GM12878 (cell line): ENCODE measurements at regions of chr11 and their contacts with region 1.

Region 1: GRCh38 chr11:122814401-122814800 is 23.9 kb upstream of the CRTAM start:
- DNase-seq: no peak
- ATAC-seq: peak; percentile 93
- H3K4me3 ChIP-seq: no peak overlapping the region
- H3K27ac ChIP-seq: no peak overlapping the region
- H3K4me1 ChIP-seq: no peaks in the 10 kb centered on the region; the same call in 1 of the 2 replicates
- H3K27me3 ChIP-seq: no peaks in the 10 kb centered on the region
- CTCF ChIP-seq: peak; percentile 22 to 51 (median 28); a peak in 3 of 6 replicates
- EP300 ChIP-seq: no peak
- POLR2A ChIP-seq: no peak
- RAD21 ChIP-seq: peak; percentile 60

Region 2: DNA sequence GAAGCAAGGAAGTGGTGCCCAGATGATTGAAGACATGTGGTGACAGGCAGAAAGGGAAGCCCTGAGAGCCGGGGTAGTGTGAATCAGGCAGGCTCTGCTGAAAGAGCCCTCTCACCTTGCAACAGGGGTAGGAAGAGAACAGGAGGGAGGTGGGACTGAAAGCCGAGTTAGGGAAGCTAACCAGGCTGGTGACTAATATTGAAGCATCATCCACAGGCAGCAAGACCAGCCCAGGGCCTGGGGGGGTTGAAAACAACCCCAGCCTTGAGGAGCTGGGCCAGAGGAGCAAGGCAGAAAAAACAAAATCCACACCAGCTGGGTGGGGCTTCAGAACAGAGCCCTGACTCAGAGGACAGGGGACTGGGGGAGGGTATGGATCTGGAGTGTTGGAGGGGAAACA is 11.1 kb before region 1 on chr11:
- CTCF ChIA-PET with region 1: interaction called, 92 read pairs
- POLR2A ChIA-PET with region 1: interaction called, 4 read pairs
- RAD21 ChIA-PET with region 1: interaction called, 38 read pairs
- SMC1A ChIA-PET with region 1: interaction called, 68 read pairs
- in situ Hi-C with region 1: no loop called
- intact Hi-C with region 1: no loop called
- DNase-seq: no peak
- ATAC-seq: peak; percentile 16
- H3K4me3 ChIP-seq: no peak overlapping the region
- H3K27ac ChIP-seq: no peak overlapping the region
- H3K4me1 ChIP-seq: peaks cover 17% of the 10 kb centered on the region
- H3K27me3 ChIP-seq: no peaks in the 10 kb centered on the region
- CTCF ChIP-seq: no peak
- EP300 ChIP-seq: no peak
- POLR2A ChIP-seq: no peak
- RAD21 ChIP-seq: no peak

Region 3: DNA sequence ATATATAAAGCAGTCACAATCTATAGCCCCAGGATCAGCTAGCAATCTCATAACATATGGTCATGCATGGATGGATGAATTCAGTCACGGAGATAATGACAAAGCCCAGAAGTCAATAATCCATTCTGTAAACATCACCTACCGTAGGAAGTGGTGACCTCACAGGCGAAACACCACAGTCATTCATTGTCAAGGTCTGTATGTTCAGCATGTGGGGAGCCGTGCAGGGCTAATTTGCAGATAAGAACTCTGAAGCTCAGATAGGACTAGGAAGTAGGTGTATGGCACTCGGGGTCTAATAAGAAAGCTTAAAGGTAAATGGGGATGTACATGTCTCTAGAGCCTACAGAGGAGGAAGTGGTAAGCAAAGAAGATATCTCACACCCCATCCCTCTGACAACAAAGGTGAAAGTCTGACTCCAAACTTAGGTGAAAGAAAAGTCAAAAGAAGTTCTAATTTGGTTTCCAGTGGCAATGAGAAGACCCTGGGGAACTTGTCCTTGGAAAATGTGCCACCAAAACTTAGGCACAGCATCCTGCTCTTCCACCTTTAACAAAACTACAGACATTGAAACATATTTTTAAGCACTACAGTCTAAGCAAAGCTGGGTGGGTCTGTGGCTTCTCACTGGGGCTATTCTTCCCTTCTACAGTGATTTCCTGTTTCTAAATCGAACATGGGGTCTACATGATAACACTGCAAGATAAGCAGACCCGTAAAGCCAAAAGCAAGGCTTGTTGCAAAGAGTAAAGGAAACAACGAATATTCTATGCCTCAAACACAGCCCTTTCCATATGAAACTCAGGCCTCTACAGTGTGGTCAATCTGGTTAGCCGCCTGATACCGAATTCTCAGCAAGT is 29.1 kb after region 1 on chr11:
- CTCF ChIA-PET with region 1: interaction called, 484 read pairs
- POLR2A ChIA-PET with region 1: interaction called, 12 read pairs
- RAD21 ChIA-PET with region 1: interaction called, 293 read pairs
- SMC1A ChIA-PET with region 1: interaction called, 485 read pairs
- in situ Hi-C with region 1: no loop called
- intact Hi-C with region 1: no loop called
- DNase-seq: no peak
- ATAC-seq: peak; percentile 87
- H3K4me3 ChIP-seq: no peak overlapping the region
- H3K27ac ChIP-seq: peak overlapping the region; percentile 42; the same call in 1 of the 2 replicates
- H3K4me1 ChIP-seq: peaks cover 11% of the 10 kb centered on the region; the same call in 1 of the 2 replicates
- H3K27me3 ChIP-seq: no peaks in the 10 kb centered on the region
- CTCF ChIP-seq: no peak
- EP300 ChIP-seq: no peak
- POLR2A ChIP-seq: no peak
- RAD21 ChIP-seq: no peak

Region 4: DNA sequence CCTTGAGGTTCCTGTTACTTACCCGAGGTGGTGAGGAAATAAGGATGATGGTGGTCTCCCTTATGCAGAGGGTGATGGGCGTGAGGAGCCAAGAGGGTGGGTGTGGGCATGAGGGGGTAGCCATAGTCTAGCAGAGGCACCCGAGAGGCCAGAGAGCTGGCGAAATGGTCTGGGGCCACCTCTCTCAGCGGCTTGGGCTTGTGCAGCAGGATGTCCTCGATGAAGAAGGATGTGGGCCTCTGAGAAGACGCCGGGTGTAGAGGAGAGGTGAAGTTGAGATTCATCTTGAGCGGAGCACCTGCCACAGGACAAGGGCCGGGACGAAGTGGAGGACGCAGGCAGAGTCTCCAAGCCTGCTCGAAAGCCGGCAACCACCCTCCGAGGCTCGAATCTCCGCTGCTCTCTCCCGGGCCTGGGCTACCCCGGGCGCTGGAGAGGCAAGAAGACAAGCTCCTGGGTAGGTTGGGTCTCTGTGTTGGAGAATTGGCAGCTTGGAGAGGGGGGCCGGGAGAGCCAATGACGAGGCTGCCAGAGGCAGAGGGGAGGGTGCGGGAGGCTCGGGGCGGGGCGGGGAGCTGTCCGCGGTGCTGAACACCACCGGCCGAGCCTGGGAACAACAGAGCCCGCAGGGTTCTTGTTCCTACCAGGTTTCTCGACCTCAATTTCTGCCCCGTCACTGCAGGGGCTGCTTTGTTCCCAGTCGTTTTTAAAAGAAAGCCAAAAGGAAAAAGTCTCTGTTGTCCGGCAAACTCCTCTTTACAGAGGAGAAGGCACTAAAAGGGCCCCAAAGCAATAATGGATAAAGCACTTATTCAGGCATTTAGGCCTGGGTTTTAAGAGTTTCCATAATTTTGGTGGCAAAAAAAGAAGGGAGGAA is 167.2 kb after region 1 on chr11 and contains the start of gene BSX:
- CTCF ChIA-PET with region 1: no interaction called
- POLR2A ChIA-PET with region 1: no interaction called
- RAD21 ChIA-PET with region 1: no interaction called
- SMC1A ChIA-PET with region 1: no interaction called
- in situ Hi-C with region 1: no loop called
- intact Hi-C with region 1: no loop called
- DNase-seq: no peak
- ATAC-seq: peak; percentile 74
- H3K4me3 ChIP-seq: no peak within 1 kb of the TSS
- H3K27ac ChIP-seq: no peak within 1 kb of the TSS
- H3K4me1 ChIP-seq: no peaks in the 10 kb centered on the region
- H3K27me3 ChIP-seq: peaks cover 20 to 51% of the 10 kb centered on the region in 2 experiments
- CTCF ChIP-seq: no peak
- EP300 ChIP-seq: no peak
- POLR2A ChIP-seq: no peak
- RAD21 ChIP-seq: no peak
- polyA plus RNA-seq, gene BSX: not detected